Head of caudate nucleus (tissue), 42 donors: ENCODE measurements at regions of chr1 and their contacts with region 1.

Region 1: DNA sequence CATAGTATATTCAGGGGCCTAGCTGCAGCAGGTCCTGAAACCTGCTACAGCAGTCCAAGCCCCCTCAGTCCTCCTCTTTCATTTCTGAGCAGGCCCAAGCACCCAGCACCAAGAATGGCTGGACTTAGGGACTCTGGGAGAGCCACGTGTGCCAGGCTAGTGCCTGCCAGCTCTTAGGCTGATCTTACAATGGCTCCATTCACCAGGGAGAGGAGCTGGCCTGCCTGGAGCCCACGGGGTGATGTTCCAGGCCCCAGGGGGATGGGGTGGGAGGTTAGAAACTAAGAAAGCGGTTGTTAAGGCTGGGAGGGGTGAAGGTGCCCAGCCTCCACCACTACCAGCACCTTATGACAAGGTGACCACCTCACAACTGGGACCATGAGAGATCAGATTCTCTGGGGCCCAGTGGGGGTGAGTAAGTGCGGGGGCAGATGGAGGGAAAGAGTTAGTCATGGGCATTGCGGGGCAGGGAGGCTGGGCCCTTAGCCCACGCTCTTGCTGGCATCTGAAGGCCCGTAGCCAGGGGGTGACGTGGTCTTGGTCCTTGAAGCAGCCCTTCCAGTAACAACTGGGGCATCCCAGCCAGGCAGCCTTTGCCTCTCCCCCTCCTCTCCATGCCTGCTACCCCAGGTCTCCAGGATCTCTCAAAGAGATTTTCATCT is 30.3 kb upstream of the CLIC4 start:
- DNase-seq: peak; percentile 79 to 97 (median 90)

Region 2: DNA sequence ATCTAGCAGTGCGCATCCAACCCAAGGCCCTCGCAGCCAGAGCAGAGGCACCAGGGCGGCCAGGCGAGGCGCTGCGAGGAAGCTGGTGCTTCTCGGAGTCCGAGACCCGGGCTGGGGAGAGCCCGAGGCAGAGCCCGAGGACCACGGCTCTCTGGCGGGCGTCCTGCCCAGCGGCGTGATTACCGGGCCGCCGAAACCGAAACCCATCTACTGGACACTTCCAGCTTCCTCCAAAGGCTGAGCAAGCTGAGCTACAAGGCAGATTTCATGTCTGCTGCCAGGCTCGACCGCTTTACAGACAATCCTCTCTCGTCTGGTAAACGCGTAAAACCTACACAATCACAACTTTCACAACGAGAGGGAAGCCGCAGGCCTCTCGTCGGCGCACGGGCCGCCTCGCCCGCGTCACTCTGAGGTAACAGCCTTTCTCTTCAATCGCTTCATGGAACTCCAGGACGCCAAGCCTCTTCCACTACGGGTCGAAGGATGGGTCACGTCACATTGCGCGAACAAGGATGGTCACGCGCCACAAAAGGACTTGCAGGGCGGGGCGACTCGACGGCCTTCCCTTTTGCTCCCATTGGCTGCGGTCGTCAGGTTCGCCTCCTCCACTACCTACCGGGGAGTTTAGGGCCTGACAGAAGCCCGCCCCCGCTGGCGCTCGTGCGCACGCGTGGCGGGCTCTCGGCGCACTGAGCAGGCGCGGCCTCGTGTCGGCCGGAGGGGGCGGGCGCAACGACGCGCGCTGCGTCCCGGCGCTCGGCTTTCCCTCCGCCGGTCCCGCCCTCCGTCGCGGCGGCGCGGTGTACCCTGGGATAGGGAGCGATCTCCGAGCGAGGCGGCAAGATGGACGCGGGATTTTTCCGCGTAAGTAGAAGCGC is 72.3 kb before region 1 on chr1 and contains the start of gene SRRM1:
- intact Hi-C with region 1: loop called (anchors 10 kb)
- DNase-seq: peak; percentile 98 to 100 (median 100)